Activated T-helper 2 cell treated with anti-CD3 and anti-CD28 coated beads, Interferon-gamma antibody, Interleukin-2, Interleukin-4, amounts not matched to agents 10 μg/mL and 5 μg/mL and 100 μg/mL, durations not matched to agents 14 hours and 24 hours and 36 hours (primary cell): ENCODE measurements at regions of chr5 and their contacts with region 1.

Region 1: DNA sequence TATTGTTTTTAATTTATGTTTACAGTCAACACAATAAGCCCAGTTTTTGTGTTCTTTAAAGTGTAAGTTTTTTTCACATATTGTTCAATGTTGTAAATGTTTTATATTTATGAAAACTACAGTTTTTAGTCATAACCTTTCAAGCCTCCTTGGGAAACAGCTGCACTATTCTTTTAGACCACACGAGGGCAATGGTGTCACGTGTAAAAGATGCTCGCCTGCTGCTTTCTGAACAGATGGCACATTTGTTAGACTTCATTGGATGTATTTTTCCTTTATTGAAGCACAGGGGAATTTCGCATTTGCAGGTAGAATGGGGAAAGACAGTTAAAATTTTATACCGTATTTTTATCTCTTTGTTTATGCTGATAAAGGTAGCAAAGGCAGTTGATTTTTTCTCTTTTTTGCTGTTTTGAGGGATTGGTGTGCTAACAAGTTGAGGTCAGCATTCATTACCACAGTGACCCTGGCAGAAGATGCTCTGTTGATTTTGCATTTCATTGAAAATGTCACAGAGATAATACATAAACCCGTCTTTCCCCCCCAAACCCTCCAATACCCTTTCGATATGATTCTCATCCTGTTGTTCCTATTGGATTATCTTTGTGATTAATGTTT is 59.0 kb downstream of the MAT2B start:
- DNase-seq: peak; percentile 43
- H3K4me3 Mint-ChIP-seq: no peak overlapping the region
- H3K27ac Mint-ChIP-seq: no peak overlapping the region
- H3K4me1 Mint-ChIP-seq: peaks cover 18% of the 10 kb centered on the region
- H3K27me3 Mint-ChIP-seq: peaks cover 57% of the 10 kb centered on the region

Region 2: GRCh38 chr5:164002628-164003027 is 438.2 kb after region 1 on chr5:
- intact Hi-C with region 1: loop called (anchors 10 kb)
- DNase-seq: no peak
- H3K4me3 Mint-ChIP-seq: no peak overlapping the region
- H3K27ac Mint-ChIP-seq: no peak overlapping the region
- H3K4me1 Mint-ChIP-seq: no peaks in the 10 kb centered on the region
- H3K27me3 Mint-ChIP-seq: no peaks in the 10 kb centered on the region

Region 3: GRCh38 chr5:164504141-164504772 is 939.8 kb after region 1 on chr5:
- intact Hi-C with region 1: loop called (anchors 1 kb)
- DNase-seq: no peak
- H3K4me3 Mint-ChIP-seq: no peak overlapping the region
- H3K27ac Mint-ChIP-seq: no peak overlapping the region
- H3K4me1 Mint-ChIP-seq: no peaks in the 10 kb centered on the region
- H3K27me3 Mint-ChIP-seq: no peaks in the 10 kb centered on the region

Region 4: GRCh38 chr5:165209086-165209727 is 1644.8 kb after region 1 on chr5:
- intact Hi-C with region 1: loop called (anchors 2 kb)
- DNase-seq: no peak
- H3K4me3 Mint-ChIP-seq: no peak overlapping the region
- H3K27ac Mint-ChIP-seq: no peak overlapping the region
- H3K4me1 Mint-ChIP-seq: no peaks in the 10 kb centered on the region
- H3K27me3 Mint-ChIP-seq: no peaks in the 10 kb centered on the region